ENCODE measurements at regions of chr7 and their contacts with region 1.

Region 1: DNA sequence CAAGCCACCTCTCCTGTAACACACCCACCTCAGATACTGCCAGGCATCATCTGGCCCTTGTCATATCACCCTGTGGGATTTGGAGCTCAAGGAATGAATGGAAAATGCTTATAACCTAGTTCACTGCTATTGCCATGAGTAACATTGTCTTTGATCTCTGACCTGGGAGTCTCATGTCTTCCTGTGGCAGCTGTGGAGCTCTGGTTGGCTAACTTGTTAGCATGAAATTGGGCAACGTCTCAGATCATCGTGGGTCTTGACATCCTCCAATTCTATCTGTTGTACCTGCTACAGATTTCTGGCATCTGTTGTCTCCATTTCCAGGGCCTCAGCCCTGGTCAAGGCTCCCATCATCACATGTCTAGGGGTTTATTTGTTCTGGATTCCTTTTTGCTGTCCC is 2.2 kb upstream of the TMEM270 start:
- DNase-seq: no peak
- ATAC-seq: no peak
- H3K4me3 ChIP-seq: no peak overlapping the region
- H3K27ac ChIP-seq: no peak overlapping the region
- H3K4me1 ChIP-seq: peaks cover 7 to 9% of the 10 kb centered on the region in 2 donors
- H3K27me3 ChIP-seq: peaks cover 0 to 10% of the 10 kb centered on the region in 2 donors
- CTCF ChIP-seq: no peak

Region 2: GRCh38 chr7:73647725-73648592 is 210.8 kb before region 1 on chr7:
- intact Hi-C with region 1: no loop called
- DNase-seq: peak in 1 of 4 donors; percentile 21
- ATAC-seq: peak; percentile 79
- H3K4me3 ChIP-seq: peak overlapping the region; percentile 15 to 19
- H3K27ac ChIP-seq: no peak overlapping the region
- H3K4me1 ChIP-seq: peaks cover 0 to 8% of the 10 kb centered on the region in 2 donors
- H3K27me3 ChIP-seq: peaks cover 18 to 100% of the 10 kb centered on the region in 2 donors
- CTCF ChIP-seq: no peak

Region 3: GRCh38 chr7:73742693-73743595 is 115.9 kb before region 1 on chr7:
- intact Hi-C with region 1: no loop called
- DNase-seq: peak; percentile 57 to 95 (median 92)
- ATAC-seq: peak; percentile 63
- H3K4me3 ChIP-seq: no peak overlapping the region
- H3K27ac ChIP-seq: peak overlapping the region; percentile 81 to 88
- H3K4me1 ChIP-seq: peaks cover 8% of the 10 kb centered on the region in 2 donors
- H3K27me3 ChIP-seq: no peaks in the 10 kb centered on the region
- CTCF ChIP-seq: no peak

Region 4: DNA sequence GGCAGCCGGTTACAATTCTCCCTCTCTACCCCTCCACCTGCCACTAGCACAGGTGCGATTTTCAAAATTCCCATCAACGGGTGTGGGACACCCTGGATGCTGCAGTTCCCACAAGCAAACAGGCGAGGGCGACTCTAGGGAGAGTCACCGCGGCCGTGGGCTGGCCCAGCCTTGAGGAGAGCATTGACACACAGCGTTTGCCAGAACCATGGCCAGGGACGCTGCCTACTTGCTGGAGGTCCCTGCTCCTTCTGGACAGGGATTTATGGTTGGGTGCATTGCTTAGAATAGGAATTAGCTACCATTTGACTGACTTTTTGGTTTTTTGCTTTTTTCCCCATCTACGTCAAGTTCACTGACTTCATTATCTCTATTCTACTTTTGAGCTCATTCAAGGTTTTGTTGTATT is 47.0 kb before region 1 on chr7:
- intact Hi-C with region 1: loop called in 1 of 2 experiments (anchors 5 kb)
- DNase-seq: peak in 2 of 4 donors; percentile 72 to 90
- ATAC-seq: peak; percentile 98
- H3K4me3 ChIP-seq: no peak overlapping the region
- H3K27ac ChIP-seq: no peak overlapping the region
- H3K4me1 ChIP-seq: no peaks in the 10 kb centered on the region
- H3K27me3 ChIP-seq: no peaks in the 10 kb centered on the region
- CTCF ChIP-seq: peak; percentile 86 to 89

Measured in left lung (tissue), 14 donors.